Calu3 (cell line): ENCODE measurements at regions of chr5 and their contacts with region 1.

Region 1: DNA sequence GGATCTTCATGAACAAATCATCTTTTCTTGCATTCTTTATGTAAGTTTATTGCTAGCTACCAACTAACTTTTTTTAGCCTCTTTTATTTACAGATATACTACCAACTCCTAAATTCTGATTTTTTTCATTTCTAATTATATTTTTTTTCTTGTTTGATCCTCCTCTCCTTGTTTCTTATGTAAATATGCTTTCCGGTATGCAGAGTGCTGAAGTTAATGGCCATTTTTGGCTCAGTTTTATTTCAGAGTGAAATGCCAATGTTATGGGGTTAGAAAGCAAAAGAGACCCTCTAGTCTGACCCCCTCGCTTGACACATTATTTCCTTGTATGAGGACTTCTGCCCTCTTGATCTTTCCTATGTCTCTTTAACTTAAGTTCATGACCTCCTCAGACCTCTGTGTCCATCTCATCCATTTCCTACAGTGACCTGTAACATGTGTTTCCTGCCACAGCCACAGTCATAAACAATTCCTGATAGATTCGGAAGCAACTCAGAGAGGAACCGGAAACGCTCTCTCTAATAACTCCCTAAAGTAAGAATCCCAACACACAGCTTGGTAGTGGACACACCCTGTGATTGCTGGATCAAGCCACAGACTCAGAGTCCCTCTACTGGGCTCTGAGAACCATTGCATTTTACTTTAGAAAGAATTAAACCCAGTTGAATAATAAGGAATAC is 42.9 kb upstream of the AFAP1L1 start:
- DNase-seq: peak; percentile 54
- H3K4me3 Mint-ChIP-seq: peak overlapping the region; percentile 5
- H3K27ac Mint-ChIP-seq: peak overlapping the region; percentile 82
- H3K4me1 Mint-ChIP-seq: peaks cover 25% of the 10 kb centered on the region
- H3K27me3 Mint-ChIP-seq: no peaks in the 10 kb centered on the region
- CTCF ChIP-seq: peak; percentile 55

Region 2: GRCh38 chr5:148912714-148913398 is 315.9 kb before region 1 on chr5:
- CTCF ChIA-PET with region 1: no interaction called
- intact Hi-C with region 1: loop called (anchors 5 kb)
- DNase-seq: peak; percentile 68
- H3K4me3 Mint-ChIP-seq: no peak overlapping the region
- H3K27ac Mint-ChIP-seq: peak overlapping the region; percentile 93
- H3K4me1 Mint-ChIP-seq: peaks cover 89% of the 10 kb centered on the region
- H3K27me3 Mint-ChIP-seq: no peaks in the 10 kb centered on the region
- CTCF ChIP-seq: peak; percentile 28

Region 3: GRCh38 chr5:149125386-149125891 is 103.3 kb before region 1 on chr5:
- CTCF ChIA-PET with region 1: interaction called, 39 read pairs
- intact Hi-C with region 1: loop called (anchors 1 kb)
- DNase-seq: peak; percentile 76
- H3K4me3 Mint-ChIP-seq: peak overlapping the region; percentile 62
- H3K27ac Mint-ChIP-seq: peak overlapping the region; percentile 74
- H3K4me1 Mint-ChIP-seq: peaks cover 65% of the 10 kb centered on the region
- H3K27me3 Mint-ChIP-seq: no peaks in the 10 kb centered on the region
- CTCF ChIP-seq: peak; percentile 49

Region 4: DNA sequence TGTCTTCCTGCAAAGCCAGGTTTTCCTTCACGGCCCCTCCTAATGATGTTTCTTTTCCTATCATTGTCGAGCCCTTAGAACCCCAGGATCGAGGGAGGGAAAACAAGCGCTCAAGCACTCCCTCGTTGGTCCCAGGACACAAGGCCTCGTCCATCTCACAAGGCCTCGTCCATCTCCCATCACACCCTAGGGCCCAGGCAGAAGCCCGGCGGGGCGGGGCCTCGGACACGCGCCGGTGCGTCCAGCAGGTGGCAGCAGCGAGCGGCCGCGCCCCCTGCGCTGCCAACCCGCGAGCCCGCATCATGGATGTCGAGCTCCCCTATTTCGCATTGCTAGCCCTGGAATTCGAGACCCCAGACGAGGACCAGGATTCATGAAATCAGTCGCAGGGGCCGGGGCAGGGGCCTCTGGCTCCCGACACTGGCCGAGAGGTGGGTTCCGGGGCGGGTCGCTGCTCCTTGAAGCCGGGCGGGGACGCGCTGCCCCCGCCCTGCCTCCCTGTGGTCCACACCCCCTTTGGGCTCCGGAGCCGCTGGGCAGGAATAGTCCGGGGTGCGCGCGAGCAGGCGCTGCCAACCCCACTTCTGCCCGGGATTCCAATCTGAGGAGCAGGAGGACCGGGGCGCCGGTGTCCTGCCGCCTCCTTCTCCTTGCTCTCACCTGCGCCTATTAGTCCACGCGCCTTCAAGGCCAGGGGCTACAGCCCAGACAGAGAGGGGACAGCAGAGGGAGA is 87.4 kb before region 1 on chr5 and contains the start of gene ABLIM3:
- CTCF ChIA-PET with region 1: interaction called, 33 read pairs
- intact Hi-C with region 1: loop called (anchors 1 kb)
- DNase-seq: peak; percentile 94
- H3K4me3 Mint-ChIP-seq: peak within 1 kb of the TSS; percentile 97
- H3K27ac Mint-ChIP-seq: peak within 1 kb of the TSS; percentile 97
- H3K4me1 Mint-ChIP-seq: peaks cover 49% of the 10 kb centered on the region
- H3K27me3 Mint-ChIP-seq: no peaks in the 10 kb centered on the region
- CTCF ChIP-seq: peak; percentile 99
- total RNA-seq, gene ABLIM3: 58.2 and 70.9 TPM in 2 replicates

Region 5: GRCh38 chr5:149195337-149195887 is 33.3 kb before region 1 on chr5:
- CTCF ChIA-PET with region 1: interaction called, 4 read pairs
- intact Hi-C with region 1: loop called (anchors 5 kb)
- DNase-seq: no peak
- H3K4me3 Mint-ChIP-seq: no peak overlapping the region
- H3K27ac Mint-ChIP-seq: peak overlapping the region; percentile 50
- H3K4me1 Mint-ChIP-seq: peaks cover 53% of the 10 kb centered on the region
- H3K27me3 Mint-ChIP-seq: no peaks in the 10 kb centered on the region
- CTCF ChIP-seq: no peak

Region 6: GRCh38 chr5:149268928-149269557 is 40.3 kb after region 1 on chr5:
- CTCF ChIA-PET with region 1: interaction called, 11 read pairs
- intact Hi-C with region 1: loop called (anchors 2 kb)
- DNase-seq: peak; percentile 18
- H3K4me3 Mint-ChIP-seq: no peak overlapping the region
- H3K27ac Mint-ChIP-seq: no peak overlapping the region
- H3K4me1 Mint-ChIP-seq: peaks cover 28% of the 10 kb centered on the region
- H3K27me3 Mint-ChIP-seq: no peaks in the 10 kb centered on the region
- CTCF ChIP-seq: peak; percentile 72

Region 7: GRCh38 chr5:149485655-149486425 is 257.1 kb after region 1 on chr5:
- CTCF ChIA-PET with region 1: no interaction called
- intact Hi-C with region 1: no loop called
- DNase-seq: peak; percentile 83
- H3K4me3 Mint-ChIP-seq: no peak overlapping the region
- H3K27ac Mint-ChIP-seq: peak overlapping the region; percentile 86
- H3K4me1 Mint-ChIP-seq: peaks cover 56% of the 10 kb centered on the region
- H3K27me3 Mint-ChIP-seq: no peaks in the 10 kb centered on the region
- CTCF ChIP-seq: no peak